HepG2 (cell line): ENCODE measurements at regions of chr17 and their contacts with region 1.

Region 1: DNA sequence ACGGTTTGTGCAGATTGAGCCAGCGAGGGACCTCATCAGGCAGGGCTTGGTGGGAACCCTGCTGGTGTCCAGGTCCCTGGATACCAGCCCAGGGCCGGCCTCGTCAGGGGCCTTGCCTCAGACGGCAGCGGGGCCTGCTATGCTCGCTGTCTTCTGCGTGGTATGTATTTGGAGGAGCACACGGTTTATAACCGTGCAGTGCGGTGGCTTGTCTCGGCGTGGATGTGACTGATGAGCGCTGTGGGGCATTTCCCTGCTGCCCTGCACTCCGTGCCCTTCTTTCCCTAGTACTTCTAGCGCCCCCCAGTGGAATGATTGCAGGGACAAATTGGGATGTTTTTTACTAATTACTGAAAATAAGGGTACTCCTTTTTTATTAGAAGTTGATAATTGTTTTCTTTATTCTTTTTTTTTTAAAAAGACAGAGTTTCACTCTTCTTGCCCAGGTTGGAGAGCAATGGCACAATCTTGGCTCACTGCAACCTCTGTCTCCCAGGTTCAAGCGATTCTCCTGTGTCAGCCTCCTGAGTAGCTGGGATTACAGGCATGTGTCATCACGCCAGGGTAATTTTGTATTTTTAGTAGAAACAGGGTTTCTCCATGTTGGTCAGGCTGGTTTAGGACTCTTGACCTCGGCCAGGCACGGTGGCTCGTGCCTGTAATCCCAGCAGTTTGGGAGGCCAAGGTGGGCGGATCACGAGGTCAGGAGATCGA is 15.3 kb downstream of the TBCD start:
- DNase-seq: peak; percentile 49
- ATAC-seq: peak; percentile 81
- H3K4me3 ChIP-seq: no peak overlapping the region
- H3K27ac ChIP-seq: no peak overlapping the region
- H3K4me1 ChIP-seq: no peaks in the 10 kb centered on the region
- H3K27me3 ChIP-seq: no peaks in the 10 kb centered on the region
- CTCF ChIP-seq: peak; percentile 85
- EP300 ChIP-seq: no peak
- POLR2A ChIP-seq: no peak
- RAD21 ChIP-seq: peak; percentile 90

Region 2: DNA sequence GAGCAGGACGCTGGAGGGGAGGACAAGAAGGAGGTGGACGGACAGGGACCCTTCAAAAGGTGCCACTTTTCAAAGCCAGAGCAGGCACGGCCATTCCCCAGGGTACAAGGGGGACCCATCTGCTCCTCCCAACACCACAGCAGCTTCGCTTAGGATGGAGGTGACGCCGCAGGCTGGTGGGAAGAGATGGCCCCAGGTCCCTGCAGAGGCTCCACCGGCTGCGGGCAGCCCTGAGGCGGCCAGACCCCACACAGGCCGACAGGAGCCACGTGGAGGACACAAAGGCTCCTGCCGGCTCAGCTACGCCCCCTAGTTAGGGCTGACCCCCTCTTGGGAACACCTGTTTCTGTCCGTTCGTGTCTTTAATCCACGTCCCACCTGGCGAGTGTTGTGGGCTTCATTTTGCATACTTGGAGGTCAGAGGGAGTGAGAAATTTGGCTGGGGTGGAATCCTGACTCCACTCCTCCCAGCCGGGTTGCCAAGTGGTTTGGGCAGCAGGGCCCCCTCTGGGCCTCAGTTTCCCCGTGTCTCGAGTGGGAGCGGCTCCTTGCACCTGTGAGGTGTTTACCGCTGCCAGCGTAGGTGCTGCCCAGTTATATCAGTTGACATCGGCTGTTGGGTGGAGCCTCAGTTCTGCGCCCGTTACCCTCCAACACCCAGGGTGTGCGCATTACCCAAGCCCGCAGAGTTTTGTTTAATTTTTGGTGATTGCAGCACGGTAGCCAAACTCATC is 56.5 kb before region 1 on chr17:
- CTCF ChIA-PET with region 1: interaction called, 10 read pairs
- POLR2A ChIA-PET with region 1: no interaction called
- in situ Hi-C with region 1: no loop called
- intact Hi-C with region 1: no loop called
- DNase-seq: no peak
- ATAC-seq: peak; percentile 13
- H3K4me3 ChIP-seq: peak overlapping the region in 1 of 3 experiments; percentile 20; a peak in 1 of 6 replicates
- H3K27ac ChIP-seq: no peak overlapping the region
- H3K4me1 ChIP-seq: peaks cover 57% of the 10 kb centered on the region
- H3K27me3 ChIP-seq: peaks cover 5 to 21% of the 10 kb centered on the region in 2 experiments; a peak in 3 of 5 replicates
- CTCF ChIP-seq: peak; percentile 67
- EP300 ChIP-seq: no peak
- POLR2A ChIP-seq: no peak
- RAD21 ChIP-seq: peak; percentile 15; the same call in 1 of the 2 replicates

Region 3: GRCh38 chr17:82962864-82963684 is 195.9 kb after region 1 on chr17:
- CTCF ChIA-PET with region 1: no interaction called
- POLR2A ChIA-PET with region 1: no interaction called
- in situ Hi-C with region 1: no loop called
- intact Hi-C with region 1: no loop called
- DNase-seq: no peak
- ATAC-seq: no peak
- H3K4me3 ChIP-seq: no peak overlapping the region
- H3K27ac ChIP-seq: no peak overlapping the region
- H3K4me1 ChIP-seq: no peaks in the 10 kb centered on the region
- H3K27me3 ChIP-seq: no peaks in the 10 kb centered on the region
- CTCF ChIP-seq: peak; percentile 47
- EP300 ChIP-seq: no peak
- POLR2A ChIP-seq: no peak
- RAD21 ChIP-seq: no peak